Activated naive CD8-positive, alpha-beta T cell treated with anti-CD3 and anti-CD28 coated beads, Interleukin-2, amount 10 ng/mL, durations not matched to agents 7 days and 5 days (primary cell): ENCODE measurements at regions of chr19 and their contacts with region 1.

Region 1: DNA sequence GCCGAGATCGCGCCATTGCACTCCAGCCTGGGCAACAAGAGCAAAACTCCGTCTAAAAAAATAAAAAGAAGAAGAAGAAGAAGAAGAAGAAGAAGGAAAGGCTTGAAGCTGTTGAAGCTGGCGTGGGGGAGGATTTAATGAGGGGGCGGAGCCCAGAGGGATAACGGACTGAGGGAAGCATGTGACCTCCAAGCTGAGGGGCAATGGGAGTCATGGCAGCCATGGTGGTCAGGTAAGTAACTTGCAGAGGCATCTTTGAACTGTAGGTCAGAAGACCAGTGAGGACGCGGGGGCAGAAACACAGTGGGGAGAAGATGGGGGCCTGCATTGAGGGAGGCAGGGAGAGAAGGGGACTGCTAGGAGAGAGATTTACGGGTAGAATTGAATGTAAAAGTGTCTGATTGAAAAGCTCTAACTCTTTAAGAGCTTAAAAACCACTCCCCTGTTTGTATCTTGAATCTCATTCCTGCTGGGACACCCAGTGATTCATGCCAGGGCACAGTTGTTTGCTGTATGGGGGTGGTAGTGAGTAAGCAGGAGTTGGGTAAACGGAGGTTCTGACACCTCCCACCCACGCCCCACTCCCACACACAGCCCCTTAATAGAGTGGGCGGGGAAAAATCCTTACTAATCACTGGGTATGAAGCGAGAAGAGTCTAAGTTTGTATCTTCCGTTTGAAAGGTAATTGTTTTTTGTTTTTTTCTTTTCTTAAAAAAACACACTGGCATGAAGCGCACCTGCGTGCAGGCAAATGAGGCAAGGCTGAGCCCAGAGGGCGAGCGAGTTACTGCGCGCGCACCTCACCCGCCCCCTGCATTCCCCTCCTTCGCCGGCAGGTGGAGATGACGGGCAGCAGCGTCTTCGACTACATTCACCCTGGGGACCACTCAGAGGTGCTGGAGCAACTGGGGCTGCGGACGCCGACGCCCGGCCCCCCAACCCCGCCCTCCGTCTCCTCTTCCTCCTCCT is 13.0 kb downstream of the TMEM160 start:
- DNase-seq: peak; percentile 99
- ATAC-seq: peak; percentile 89
- H3K4me3 Mint-ChIP-seq: peak overlapping the region; percentile 90
- H3K27ac Mint-ChIP-seq: peak overlapping the region; percentile 81
- H3K4me1 Mint-ChIP-seq: peaks cover 13% of the 10 kb centered on the region
- H3K27me3 Mint-ChIP-seq: peaks cover 26% of the 10 kb centered on the region

Region 2: GRCh38 chr19:46946611-46947238 is 88.7 kb before region 1 on chr19:
- POLR2A ChIA-PET with region 1: no interaction called
- DNase-seq: no peak
- ATAC-seq: no peak
- H3K4me3 Mint-ChIP-seq: no peak overlapping the region
- H3K27ac Mint-ChIP-seq: no peak overlapping the region
- H3K4me1 Mint-ChIP-seq: peaks cover 17% of the 10 kb centered on the region
- H3K27me3 Mint-ChIP-seq: no peaks in the 10 kb centered on the region

Region 3: DNA sequence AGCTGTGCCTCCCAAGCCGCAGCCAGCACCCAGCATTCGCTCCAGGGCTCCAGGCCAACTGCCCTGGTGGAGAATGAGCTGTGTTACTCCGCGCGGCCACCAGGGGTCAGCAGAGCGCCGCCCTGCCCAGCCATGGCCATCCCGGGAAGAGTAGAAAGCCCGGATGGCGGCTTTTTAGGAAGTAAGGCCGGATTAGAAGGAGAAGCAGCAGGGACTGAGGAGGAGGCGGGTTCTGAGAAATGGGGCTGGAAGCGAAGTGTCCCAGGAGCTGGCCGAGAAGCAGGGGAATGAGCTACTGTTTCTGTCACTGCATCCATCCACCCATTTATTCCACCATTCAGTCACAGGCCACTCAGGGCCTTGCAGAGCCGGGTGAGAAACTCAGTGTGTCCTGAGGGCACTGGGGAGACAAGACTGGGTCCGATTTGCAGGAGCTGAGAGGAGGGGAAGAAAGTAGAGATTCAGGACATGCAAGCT is 22.3 kb before region 1 on chr19:
- POLR2A ChIA-PET with region 1: no interaction called
- DNase-seq: peak; percentile 81
- ATAC-seq: peak; percentile 65
- H3K4me3 Mint-ChIP-seq: peak overlapping the region; percentile 18
- H3K27ac Mint-ChIP-seq: no peak overlapping the region
- H3K4me1 Mint-ChIP-seq: peaks cover 8% of the 10 kb centered on the region
- H3K27me3 Mint-ChIP-seq: peaks cover 16% of the 10 kb centered on the region

Region 4: DNA sequence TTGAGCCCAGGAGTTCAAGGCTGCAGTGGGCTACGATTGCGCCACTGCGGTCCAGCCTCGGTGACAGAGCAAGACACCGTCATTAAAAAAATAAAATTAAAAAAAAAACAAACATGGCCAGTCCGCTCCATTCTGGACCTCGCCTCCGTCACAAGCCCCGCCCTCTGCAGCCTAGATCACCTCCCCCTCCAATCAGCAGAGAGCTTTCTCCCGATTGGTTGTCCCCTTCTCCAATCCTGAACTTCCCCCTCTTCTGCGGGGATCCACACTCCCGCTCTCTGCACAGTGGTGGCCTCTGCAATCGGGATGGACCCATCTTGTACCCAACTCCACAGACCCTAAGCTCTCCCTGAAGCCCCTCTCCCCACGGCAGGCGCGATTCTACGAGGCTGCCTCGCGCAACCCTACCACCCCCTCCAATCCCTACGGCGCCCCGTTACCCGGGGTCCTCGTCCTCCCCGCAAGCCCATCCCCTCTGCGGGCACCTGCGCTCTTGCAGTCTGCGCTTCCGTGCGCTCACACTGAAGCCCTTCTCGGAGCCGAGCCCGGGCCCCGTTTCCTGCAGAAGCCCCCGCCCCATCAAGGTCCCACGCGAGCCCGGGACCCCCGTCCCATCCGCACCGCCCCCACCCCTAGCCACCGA is 12.5 kb after region 1 on chr19:
- POLR2A ChIA-PET with region 1: interaction called, 16 read pairs
- DNase-seq: peak; percentile 78
- ATAC-seq: peak; percentile 56
- H3K4me3 Mint-ChIP-seq: peak overlapping the region; percentile 97
- H3K27ac Mint-ChIP-seq: peak overlapping the region; percentile 95
- H3K4me1 Mint-ChIP-seq: peaks cover 18% of the 10 kb centered on the region
- H3K27me3 Mint-ChIP-seq: no peaks in the 10 kb centered on the region